Posterior vena cava (tissue), 2 donors: ENCODE measurements at regions of chr1 and their contacts with region 1.

Region 1: GRCh38 chr1:224116131-224116530 is 2.2 kb downstream of the FBXO28 start:
- DNase-seq: no peak

Region 2: DNA sequence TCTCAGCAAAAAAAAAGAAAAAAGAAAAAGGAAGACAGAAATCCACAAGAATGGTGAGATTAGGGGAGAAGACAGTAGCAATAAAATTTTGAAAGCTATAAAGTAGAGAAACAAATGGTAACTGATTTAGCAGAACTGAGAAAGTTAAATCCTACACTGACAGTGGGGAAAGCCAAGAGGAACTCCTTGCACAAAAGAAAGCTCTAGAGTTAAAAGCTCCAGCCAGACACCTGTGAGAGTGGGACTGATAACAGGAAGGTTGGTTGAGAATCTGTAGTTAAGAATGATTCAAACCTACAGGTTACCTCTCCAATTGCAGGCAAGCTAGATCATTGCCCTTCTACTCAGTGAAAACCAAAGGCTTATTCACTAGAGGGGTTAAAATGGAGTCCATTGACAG is 21.4 kb after region 1 on chr1:
- intact Hi-C with region 1: no loop called
- DNase-seq: no peak

Region 3: GRCh38 chr1:224329842-224330753 is 214.0 kb after region 1 on chr1 and contains the start of gene NVL:
- intact Hi-C with region 1: loop called in 1 of 2 experiments (anchors 5 kb)
- DNase-seq: peak; percentile 95
- total RNA-seq, gene NVL: 17.7 to 19.3 TPM